Heart right ventricle (tissue), 16 donors: ENCODE measurements at regions of chr20 and their contacts with region 1.

Region 1: GRCh38 chr20:63495741-63496595 is 2.9 kb downstream of the EEF1A2 start:
- DNase-seq: peak; percentile 67 to 77
- ATAC-seq: peak; percentile 18 to 61 (median 38)
- H3K4me3 ChIP-seq: peak overlapping the region; percentile 18 to 67 (median 60)
- H3K27ac ChIP-seq: peak overlapping the region in 8 of 10 donors; percentile 75 to 98 (median 93)
- H3K4me1 ChIP-seq: peaks cover 10 to 45% (median 37%) of the 10 kb centered on the region in 9 donors
- H3K27me3 ChIP-seq: peaks cover 0 to 56% (median 38%) of the 10 kb centered on the region in 7 donors
- CTCF ChIP-seq: peak; percentile 89 to 98 (median 96)

Region 2: DNA sequence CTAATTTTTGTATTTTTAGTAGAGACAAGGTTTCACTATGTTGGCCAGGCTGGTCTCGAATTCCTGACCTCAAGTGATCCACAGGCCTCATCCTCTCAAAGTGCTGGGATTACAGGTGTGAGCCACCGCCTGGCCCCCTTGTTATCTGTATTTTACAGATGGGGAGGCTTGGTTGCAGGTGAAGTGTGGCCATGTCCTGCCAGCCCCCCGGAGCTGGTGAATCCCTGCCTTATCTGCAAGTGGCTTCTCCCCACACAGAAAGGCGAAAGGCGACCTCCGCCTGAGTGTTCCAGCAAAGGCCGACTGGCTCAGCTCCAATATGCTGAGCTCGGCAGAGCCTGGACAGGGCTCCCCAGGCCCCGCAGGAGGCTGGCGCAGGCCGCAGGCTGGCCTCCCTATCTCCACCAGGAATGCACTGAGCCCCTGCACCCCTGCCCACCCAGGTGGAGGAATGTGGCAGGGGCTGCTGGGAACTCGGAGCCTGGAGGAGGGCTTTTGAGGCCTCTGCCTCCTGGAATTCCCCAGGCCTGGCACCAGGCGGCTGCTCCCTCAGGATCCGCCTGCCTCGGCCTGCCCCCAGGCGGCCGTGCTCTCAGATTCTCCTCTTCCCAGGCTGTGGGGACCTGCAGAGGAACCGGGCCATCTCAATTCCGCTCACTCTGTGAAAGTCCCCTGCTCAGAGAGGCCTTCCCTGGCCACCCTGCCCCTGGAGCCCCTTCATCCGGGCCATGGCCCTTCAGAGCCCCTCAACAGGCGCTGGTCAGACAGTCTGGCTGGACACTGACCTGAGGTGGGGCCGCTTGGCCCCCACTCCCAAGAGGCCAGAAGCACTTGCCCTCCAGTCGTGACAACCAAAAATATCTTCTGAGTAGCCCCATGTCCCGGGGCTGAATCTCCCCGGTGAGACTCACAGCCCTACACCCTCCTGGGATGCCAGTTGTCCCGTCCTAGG is 1119.6 kb before region 1 on chr20:
- intact Hi-C with region 1: loop called in 1 of 10 experiments (anchors 5 kb)
- DNase-seq: peak; percentile 52 to 62
- ATAC-seq: peak; percentile 40 to 84 (median 68)
- H3K4me3 ChIP-seq: no peak overlapping the region
- H3K27ac ChIP-seq: peak overlapping the region in 8 of 10 donors; percentile 40 to 84 (median 61)
- H3K4me1 ChIP-seq: peaks cover 6 to 69% (median 44%) of the 10 kb centered on the region in 9 donors
- H3K27me3 ChIP-seq: no peaks in the 10 kb centered on the region
- CTCF ChIP-seq: peak; percentile 10 to 63 (median 55)

Region 3: DNA sequence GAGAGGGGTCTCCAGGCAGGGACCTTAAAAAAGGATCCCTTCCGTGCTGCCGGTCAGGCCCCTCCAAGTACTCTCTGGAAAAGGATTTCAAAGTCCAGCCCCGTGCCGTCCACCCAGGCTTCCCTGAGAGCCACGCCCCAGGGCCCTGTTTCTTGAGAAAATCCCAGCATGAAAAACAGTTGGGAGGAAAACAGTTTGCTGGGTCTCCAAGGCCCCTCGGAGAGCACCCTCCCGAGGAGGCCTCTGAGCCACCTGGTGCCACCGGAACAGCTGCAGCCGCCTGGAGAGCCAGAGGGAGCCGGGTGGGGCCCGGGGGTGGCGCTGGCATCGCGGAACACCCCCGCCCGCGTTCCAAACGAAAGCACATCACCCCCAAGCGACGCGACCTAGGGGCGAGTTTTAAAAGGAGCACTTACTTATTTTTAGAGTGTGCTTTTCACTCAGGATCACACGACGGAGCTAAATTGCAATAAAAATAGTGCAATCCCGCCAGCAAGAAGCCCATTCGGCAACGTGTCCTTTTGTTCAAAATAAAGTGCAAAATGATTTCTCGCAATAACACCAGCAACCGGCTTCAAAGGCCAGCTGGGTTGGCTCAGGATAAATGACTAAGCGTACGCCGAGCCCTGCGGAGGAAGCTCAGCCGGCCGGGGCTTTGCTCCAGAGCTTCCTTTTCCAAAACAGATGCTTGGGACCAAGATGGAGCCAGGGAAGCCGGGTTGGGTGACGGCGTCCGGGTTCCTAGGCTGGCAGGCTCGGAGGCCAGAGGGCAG is 344.2 kb before region 1 on chr20:
- intact Hi-C with region 1: no loop called
- DNase-seq: peak; percentile 16 to 36
- ATAC-seq: peak in 4 of 8 donors; percentile 5 to 58 (median 47)
- H3K4me3 ChIP-seq: peak overlapping the region in 3 of 10 donors; percentile 2 to 20 (median 7)
- H3K27ac ChIP-seq: peak overlapping the region in 6 of 10 donors; percentile 7 to 31 (median 19)
- H3K4me1 ChIP-seq: peaks cover 0 to 20% (median 0%) of the 10 kb centered on the region in 9 donors
- H3K27me3 ChIP-seq: peaks cover 7 to 78% (median 76%) of the 10 kb centered on the region in 7 donors
- CTCF ChIP-seq: no peak

Region 4: GRCh38 chr20:63520504-63520933 is 24.6 kb after region 1 on chr20 and contains the start of gene PPDPF:
- intact Hi-C with region 1: loop called in 5 of 10 experiments (anchors 1 to 2 kb)
- DNase-seq: peak; percentile 79 to 89
- ATAC-seq: peak; percentile 86 to 92 (median 91)
- H3K4me3 ChIP-seq: peak within 1 kb of the TSS; percentile 55 to 99 (median 74)
- H3K27ac ChIP-seq: peak within 1 kb of the TSS; percentile 90 to 100 (median 96)
- H3K4me1 ChIP-seq: peaks cover 14 to 39% (median 22%) of the 10 kb centered on the region in 9 donors
- H3K27me3 ChIP-seq: peaks cover 0 to 3% (median 0%) of the 10 kb centered on the region in 7 donors
- CTCF ChIP-seq: no peak
- total RNA-seq, gene PPDPF: 186 to 433 (median 269) TPM